Vagina (tissue), 2 donors: ENCODE measurements at regions of chr15 and their contacts with region 1.

Region 1: DNA sequence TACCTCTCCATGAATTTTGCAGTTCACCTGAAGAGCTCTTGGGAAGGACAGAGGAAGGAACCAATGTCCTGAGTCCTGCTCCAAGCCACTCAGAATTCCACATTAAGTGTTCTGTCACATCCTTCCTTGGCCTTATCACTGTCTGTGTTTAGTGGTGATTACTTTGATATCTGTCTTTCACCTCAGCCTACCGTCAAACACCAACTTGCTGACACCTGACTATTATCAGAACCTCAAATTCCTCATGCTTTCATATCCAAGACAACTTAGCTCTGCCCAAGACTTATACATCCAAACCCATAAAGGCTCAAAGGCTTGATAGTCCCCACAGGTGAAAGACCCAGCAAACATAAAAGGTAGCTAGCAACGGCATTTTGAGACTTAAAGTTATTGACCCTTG is 280.0 kb downstream of the MEX3B start:
- DNase-seq: peak in 1 of 2 donors; percentile 13
- H3K4me3 ChIP-seq: no peak overlapping the region
- H3K27ac ChIP-seq: no peak overlapping the region
- H3K4me1 ChIP-seq: no peaks in the 10 kb centered on the region
- H3K27me3 ChIP-seq: no peaks in the 10 kb centered on the region
- CTCF ChIP-seq: no peak
- POLR2A ChIP-seq: no peak

Region 2: DNA sequence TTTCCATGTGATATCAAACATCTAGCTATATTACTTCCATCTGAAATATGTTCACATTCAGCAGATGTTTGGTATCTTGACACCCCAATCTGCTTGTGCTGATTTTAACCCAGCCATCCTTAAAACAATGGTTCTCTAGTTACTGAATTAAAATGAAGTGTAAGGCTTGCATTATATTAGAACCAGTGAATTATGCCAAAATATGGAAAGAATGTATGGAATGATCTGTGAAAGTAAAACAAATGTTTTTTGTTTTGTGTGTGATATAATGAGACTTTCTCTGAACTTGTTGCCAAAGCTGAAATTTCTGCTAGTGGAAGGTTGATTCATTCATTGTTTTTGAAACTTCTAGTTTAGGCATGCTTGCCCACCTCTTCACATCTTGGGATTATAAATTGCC is 37.1 kb before region 1 on chr15:
- intact Hi-C with region 1: loop called (anchors 2 kb)
- DNase-seq: no peak
- H3K4me3 ChIP-seq: no peak overlapping the region
- H3K27ac ChIP-seq: no peak overlapping the region
- H3K4me1 ChIP-seq: peaks cover 17% of the 10 kb centered on the region
- H3K27me3 ChIP-seq: no peaks in the 10 kb centered on the region
- CTCF ChIP-seq: no peak
- POLR2A ChIP-seq: no peak